Left cardiac atrium (tissue), 4 donors: ENCODE measurements at regions of chr21 and their contacts with region 1.

Region 1: DNA sequence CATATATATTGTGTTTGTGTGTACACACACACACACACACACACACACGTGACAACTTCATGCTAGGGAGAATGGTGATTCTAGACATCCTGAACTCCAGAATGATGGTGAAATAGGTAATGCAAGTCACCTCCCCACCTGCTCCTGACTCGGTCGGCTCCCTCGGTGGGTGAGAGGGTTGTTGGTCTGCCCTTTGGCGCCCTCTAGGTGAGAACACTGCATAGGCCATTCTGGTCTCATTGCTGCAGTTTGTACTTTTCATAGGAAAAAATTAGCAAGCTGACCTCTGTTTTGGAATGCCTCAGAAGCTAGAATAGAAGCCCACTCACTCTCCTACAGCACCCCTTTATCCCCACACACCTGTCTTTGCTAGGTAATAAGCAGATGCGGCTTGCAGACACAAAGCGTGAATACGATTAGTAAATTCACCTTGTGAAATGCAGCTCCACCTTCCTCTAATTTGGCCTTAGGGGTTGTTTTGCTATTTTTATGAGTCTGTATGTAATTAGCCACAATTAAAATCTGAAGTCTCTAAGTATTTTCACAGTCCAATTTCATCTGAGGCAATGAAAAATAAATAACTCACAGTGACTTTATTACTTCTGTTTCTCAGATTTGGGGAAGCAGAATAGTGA is 130.0 kb upstream of the KCNJ15 start:
- DNase-seq: peak; percentile 48
- ATAC-seq: peak; percentile 74 to 77

Region 2: GRCh38 chr21:37700641-37701202 is 426.1 kb before region 1 on chr21:
- intact Hi-C with region 1: loop called in 1 of 2 experiments (anchors 10 kb)
- DNase-seq: peak; percentile 27
- ATAC-seq: peak; percentile 50 to 89

Region 3: GRCh38 chr21:37787456-37787855 is 339.3 kb before region 1 on chr21:
- intact Hi-C with region 1: no loop called
- DNase-seq: no peak
- ATAC-seq: no peak

Region 4: DNA sequence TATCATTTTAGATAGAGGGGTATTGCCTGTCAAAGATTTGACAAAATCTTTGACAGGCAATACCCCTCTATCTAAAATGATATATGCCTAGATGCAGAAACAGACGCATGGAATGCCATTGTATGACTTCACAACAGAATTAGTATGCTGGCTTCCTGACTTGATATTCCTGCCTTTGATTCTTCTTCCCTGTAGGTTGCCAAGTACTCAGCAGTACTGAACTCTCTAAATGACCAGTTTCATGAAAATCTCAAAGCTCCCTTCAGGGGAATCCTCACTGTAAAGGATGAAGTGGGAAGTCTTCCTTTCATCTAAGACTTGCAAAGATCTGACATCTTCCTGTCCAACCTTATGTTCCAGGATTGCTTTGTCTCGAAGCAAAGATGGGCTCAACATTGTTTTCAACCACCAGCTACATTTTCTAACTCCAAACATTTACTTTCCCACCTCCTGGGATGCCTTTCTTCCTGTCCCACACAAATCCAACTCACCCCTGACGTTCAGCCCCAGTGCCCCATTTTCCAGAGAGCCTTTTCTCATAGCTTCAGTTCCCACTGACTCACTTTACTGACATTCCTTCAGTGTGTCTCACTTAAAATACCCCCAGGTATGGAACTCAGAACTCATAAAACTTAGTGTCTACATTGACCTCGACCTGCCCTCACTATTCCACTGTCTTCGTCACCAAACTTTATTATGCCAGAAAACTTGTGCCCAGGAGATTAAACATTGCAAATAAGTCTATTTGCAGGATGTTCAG is 143.3 kb before region 1 on chr21:
- intact Hi-C with region 1: no loop called
- DNase-seq: no peak
- ATAC-seq: no peak